Ascending aorta (tissue), 2 donors: ENCODE measurements at regions of chr1 and their contacts with region 1.

Region 1: GRCh38 chr1:50978144-50978851 is 8.3 kb downstream of the CDKN2C start:
- DNase-seq: peak in 1 of 2 donors; percentile 74
- H3K4me3 ChIP-seq: peak overlapping the region; percentile 79 to 87
- H3K27ac ChIP-seq: peak overlapping the region; percentile 92
- H3K4me1 ChIP-seq: no peaks in the 10 kb centered on the region
- H3K27me3 ChIP-seq: no peaks in the 10 kb centered on the region
- CTCF ChIP-seq: no peak

Region 2: GRCh38 chr1:50968158-50968820 is 10.0 kb before region 1 on chr1:
- intact Hi-C with region 1: loop called (anchors 1 kb)
- DNase-seq: peak; percentile 40 to 93
- H3K4me3 ChIP-seq: peak overlapping the region; percentile 80 to 93
- H3K27ac ChIP-seq: peak overlapping the region; percentile 95 to 98
- H3K4me1 ChIP-seq: no peaks in the 10 kb centered on the region
- H3K27me3 ChIP-seq: no peaks in the 10 kb centered on the region
- CTCF ChIP-seq: peak; percentile 5 to 57 (median 38)

Region 3: DNA sequence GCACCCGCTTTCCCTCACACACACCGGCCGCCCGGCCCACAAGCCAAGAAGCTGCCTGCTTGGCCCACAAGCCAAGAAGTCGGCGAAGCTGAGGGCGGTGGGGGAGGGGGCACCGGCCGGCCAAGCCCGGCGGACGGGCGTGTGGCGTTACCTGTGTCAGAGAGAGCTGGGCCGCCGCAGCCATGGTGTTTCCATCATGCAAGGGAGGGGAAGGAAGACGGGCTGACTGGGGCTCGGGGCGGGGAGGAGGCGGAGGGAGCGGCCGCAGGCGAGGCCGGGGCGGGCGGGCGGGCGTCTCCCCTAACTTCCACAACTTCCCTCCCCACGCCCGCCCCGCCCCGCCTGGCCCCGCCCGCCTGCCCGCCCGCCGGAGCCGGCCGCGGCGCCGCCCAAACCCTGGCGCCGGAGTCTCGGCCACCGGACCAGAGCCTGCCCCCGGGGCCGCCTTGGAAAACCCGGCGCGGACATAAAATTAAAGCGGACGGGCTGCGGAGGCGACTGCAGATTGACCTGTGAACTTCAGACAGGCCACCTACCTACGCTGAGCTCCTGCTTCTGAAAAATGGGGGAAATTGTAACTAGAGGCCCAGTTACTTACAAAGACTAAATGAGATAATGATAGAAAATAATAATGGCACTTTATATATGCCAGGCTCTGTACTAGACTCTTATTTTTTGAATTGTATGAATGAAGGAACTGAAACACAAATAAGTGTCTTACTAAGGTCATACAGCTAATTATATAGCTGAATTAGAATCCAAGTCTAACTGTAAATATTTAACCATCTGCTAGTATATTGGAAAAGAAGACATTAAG is 541.0 kb after region 1 on chr1 and contains the start of gene EPS15:
- intact Hi-C with region 1: loop called (anchors 10 kb)
- DNase-seq: peak; percentile 55 to 91
- H3K4me3 ChIP-seq: peak within 1 kb of the TSS; percentile 95 to 98
- H3K27ac ChIP-seq: peak within 1 kb of the TSS; percentile 86 to 93
- H3K4me1 ChIP-seq: peaks cover 3 to 16% of the 10 kb centered on the region in 2 donors
- H3K27me3 ChIP-seq: no peaks in the 10 kb centered on the region
- CTCF ChIP-seq: no peak
- total RNA-seq, gene EPS15: 44.6 TPM